ENCODE measurements at regions of chr6 and their contacts with region 1.

Region 1: GRCh38 chr6:154276810-154277628 is 79.6 kb downstream of the IPCEF1 start:
- DNase-seq: no peak
- H3K4me3 ChIP-seq: no peak overlapping the region
- H3K27ac ChIP-seq: no peak overlapping the region
- H3K4me1 ChIP-seq: no peaks in the 10 kb centered on the region
- H3K27me3 ChIP-seq: no peaks in the 10 kb centered on the region
- CTCF ChIP-seq: peak in 1 of 3 experiments; percentile 30; a peak in 1 of 4 replicates
- EP300 ChIP-seq: no peak
- POLR2A ChIP-seq: no peak
- RAD21 ChIP-seq: peak in 1 of 2 experiments; percentile 42

Region 2: GRCh38 chr6:154247119-154247861 is 29.7 kb before region 1 on chr6:
- CTCF ChIA-PET with region 1: interaction called, 11 read pairs
- POLR2A ChIA-PET with region 1: no interaction called
- DNase-seq: no peak
- H3K4me3 ChIP-seq: peak overlapping the region in 3 of 4 experiments; percentile 11 to 48 (median 16); a peak in 4 of 8 replicates
- H3K27ac ChIP-seq: no peak overlapping the region
- H3K4me1 ChIP-seq: peaks cover 1 to 19% (median 12%) of the 10 kb centered on the region in 4 experiments; a peak in 5 of 7 replicates
- H3K27me3 ChIP-seq: no peaks in the 10 kb centered on the region
- CTCF ChIP-seq: no peak
- EP300 ChIP-seq: no peak
- POLR2A ChIP-seq: no peak
- RAD21 ChIP-seq: no peak